MCF 10A (cell line): ENCODE measurements at regions of chr9 and their contacts with region 1.

Region 1: GRCh38 chr9:108850293-108850897 is 5.4 kb downstream of the ACTL7B start:
- DNase-seq: peak; percentile 60
- H3K4me3 Mint-ChIP-seq: no peak overlapping the region
- H3K27ac Mint-ChIP-seq: no peak overlapping the region
- H3K4me1 Mint-ChIP-seq: no peaks in the 10 kb centered on the region
- H3K27me3 Mint-ChIP-seq: no peaks in the 10 kb centered on the region
- CTCF ChIP-seq: peak; percentile 52

Region 2: DNA sequence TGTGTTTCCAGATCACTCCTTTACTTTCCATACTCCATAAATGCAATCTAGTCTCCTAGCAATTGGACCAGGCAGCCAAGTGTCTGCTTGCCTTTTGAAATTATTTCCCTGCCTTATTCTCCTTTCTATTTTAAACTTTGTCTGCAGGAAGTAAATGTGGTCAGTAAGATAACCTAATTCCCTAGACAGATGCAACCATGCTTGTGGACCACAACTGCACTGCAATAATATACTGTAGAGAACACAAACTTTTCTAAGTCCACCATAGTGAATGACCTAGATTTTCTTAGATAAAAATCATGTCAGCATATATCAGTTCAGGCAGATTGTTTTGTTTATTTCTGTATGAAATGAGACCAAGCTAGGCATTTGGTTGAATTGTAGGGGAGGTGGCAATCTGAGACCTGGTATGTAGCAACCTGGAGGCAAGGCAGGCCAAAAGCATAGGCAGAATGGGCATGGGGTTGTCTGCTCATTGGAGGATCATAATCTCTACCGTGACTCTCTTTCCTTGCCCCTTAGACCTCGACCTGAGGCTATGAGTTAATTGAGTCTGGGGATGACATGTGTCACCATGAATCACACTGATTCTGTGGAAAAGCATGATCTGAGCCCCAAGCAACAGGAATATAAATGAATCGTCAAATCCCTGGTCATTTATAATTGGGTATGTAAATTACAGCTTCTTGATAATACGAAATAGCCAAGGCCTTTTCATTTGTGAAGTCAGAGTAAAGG is 15.3 kb before region 1 on chr9:
- CTCF ChIA-PET with region 1: interaction called, 15 read pairs
- POLR2A ChIA-PET with region 1: interaction called, 4 read pairs
- intact Hi-C with region 1: no loop called
- DNase-seq: peak; percentile 18
- H3K4me3 Mint-ChIP-seq: no peak overlapping the region
- H3K27ac Mint-ChIP-seq: no peak overlapping the region
- H3K4me1 Mint-ChIP-seq: peaks cover 36% of the 10 kb centered on the region
- H3K27me3 Mint-ChIP-seq: no peaks in the 10 kb centered on the region
- CTCF ChIP-seq: no peak

Region 3: GRCh38 chr9:108885643-108886348 is 35.4 kb after region 1 on chr9:
- CTCF ChIA-PET with region 1: interaction called, 7 read pairs
- POLR2A ChIA-PET with region 1: no interaction called
- intact Hi-C with region 1: loop called (anchors 5 kb)
- DNase-seq: peak; percentile 96
- H3K4me3 Mint-ChIP-seq: no peak overlapping the region
- H3K27ac Mint-ChIP-seq: peak overlapping the region; percentile 35
- H3K4me1 Mint-ChIP-seq: peaks cover 18% of the 10 kb centered on the region
- H3K27me3 Mint-ChIP-seq: no peaks in the 10 kb centered on the region
- CTCF ChIP-seq: no peak

Region 4: GRCh38 chr9:108933718-108934322 is 83.4 kb after region 1 on chr9 and contains the start of gene ELP1:
- CTCF ChIA-PET with region 1: no interaction called
- POLR2A ChIA-PET with region 1: interaction called, 4 read pairs
- intact Hi-C with region 1: loop called (anchors 1 kb)
- DNase-seq: peak; percentile 94
- H3K4me3 Mint-ChIP-seq: peak within 1 kb of the TSS; percentile 98
- H3K27ac Mint-ChIP-seq: peak within 1 kb of the TSS; percentile 93
- H3K4me1 Mint-ChIP-seq: peaks cover 24% of the 10 kb centered on the region
- H3K27me3 Mint-ChIP-seq: no peaks in the 10 kb centered on the region
- CTCF ChIP-seq: peak; percentile 6
- total RNA-seq, gene ELP1: 36.9 and 39.6 TPM in 2 replicates

Region 5: DNA sequence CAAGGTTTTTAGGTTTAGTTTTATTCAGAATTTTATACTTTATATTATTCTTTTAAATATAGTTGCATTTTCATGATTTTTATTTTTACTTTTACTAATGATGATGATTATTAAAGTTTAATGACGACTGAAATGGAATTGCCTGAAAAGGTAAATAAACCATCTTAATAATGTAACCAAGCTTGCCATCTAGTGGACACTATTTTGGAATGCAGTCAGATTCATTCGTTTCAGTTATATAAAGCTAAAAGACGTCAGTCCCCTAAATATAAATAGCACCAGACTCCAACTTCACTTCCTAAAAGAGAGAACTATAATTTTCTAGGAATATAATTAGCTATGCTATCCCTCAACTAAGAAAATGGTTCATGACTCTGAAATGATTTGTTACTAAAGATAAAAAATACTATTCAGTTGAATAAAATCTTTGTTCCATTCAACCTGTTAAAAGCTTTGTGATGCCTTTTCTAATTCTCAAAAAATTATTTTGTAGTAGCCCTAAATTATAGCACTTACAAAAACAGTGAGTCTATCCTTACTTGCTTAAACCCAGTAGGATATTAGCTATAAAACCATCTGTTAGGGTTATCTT is 103.7 kb after region 1 on chr9:
- CTCF ChIA-PET with region 1: interaction called, 13 read pairs
- POLR2A ChIA-PET with region 1: no interaction called
- intact Hi-C with region 1: loop called (anchors 1 kb)
- DNase-seq: peak; percentile 56
- H3K4me3 Mint-ChIP-seq: no peak overlapping the region
- H3K27ac Mint-ChIP-seq: no peak overlapping the region
- H3K4me1 Mint-ChIP-seq: no peaks in the 10 kb centered on the region
- H3K27me3 Mint-ChIP-seq: no peaks in the 10 kb centered on the region
- CTCF ChIP-seq: peak; percentile 52